ENCODE measurements at regions of chr3 and their contacts with region 1.

Region 1: DNA sequence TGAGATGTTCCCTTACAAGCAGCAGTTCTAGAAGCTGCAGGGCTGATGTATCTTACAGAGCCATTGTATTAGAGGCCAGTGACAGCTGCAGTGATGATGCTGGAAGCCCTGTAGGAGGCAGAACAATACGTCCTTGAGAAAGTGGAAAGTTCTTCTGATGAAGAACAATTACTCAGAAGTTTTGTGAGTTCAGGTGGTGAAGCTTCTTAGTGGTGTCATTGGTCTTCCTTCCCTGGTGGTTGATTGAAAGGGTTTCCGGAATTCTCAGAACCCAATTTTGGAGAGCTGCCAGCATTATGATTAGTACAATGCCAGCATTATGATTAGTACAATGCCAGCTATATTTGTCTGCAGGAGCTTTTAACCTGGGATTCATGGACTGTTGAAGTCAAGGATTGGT is 356.4 kb downstream of the MFSD1 start:
- DNase-seq: peak; percentile 88
- H3K4me3 ChIP-seq: no peak overlapping the region
- H3K27ac ChIP-seq: peak overlapping the region; percentile 48
- H3K4me1 ChIP-seq: peaks cover 15% of the 10 kb centered on the region
- H3K27me3 ChIP-seq: no peaks in the 10 kb centered on the region
- CTCF ChIP-seq: peak; percentile 30 to 42
- POLR2A ChIP-seq: no peak

Region 2: GRCh38 chr3:158845765-158846350 is 312.4 kb before region 1 on chr3:
- CTCF ChIA-PET with region 1: interaction called, 4 read pairs
- POLR2A ChIA-PET with region 1: no interaction called
- dilution Hi-C with region 1: no loop called
- intact Hi-C with region 1: loop called (anchors 10 kb)
- DNase-seq: peak; percentile 30
- H3K4me3 ChIP-seq: no peak overlapping the region
- H3K27ac ChIP-seq: no peak overlapping the region
- H3K4me1 ChIP-seq: no peaks in the 10 kb centered on the region
- H3K27me3 ChIP-seq: no peaks in the 10 kb centered on the region
- CTCF ChIP-seq: peak; percentile 49 to 60
- POLR2A ChIP-seq: no peak

Region 3: GRCh38 chr3:159082519-159082918 is 75.7 kb before region 1 on chr3:
- CTCF ChIA-PET with region 1: no interaction called
- POLR2A ChIA-PET with region 1: no interaction called
- dilution Hi-C with region 1: no loop called
- intact Hi-C with region 1: loop called (anchors 5 kb)
- DNase-seq: peak; percentile 61
- H3K4me3 ChIP-seq: no peak overlapping the region
- H3K27ac ChIP-seq: peak overlapping the region; percentile 52
- H3K4me1 ChIP-seq: peaks cover 10% of the 10 kb centered on the region
- H3K27me3 ChIP-seq: no peaks in the 10 kb centered on the region
- CTCF ChIP-seq: no peak
- POLR2A ChIP-seq: no peak

Region 4: GRCh38 chr3:159169828-159170227 is 11.6 kb after region 1 on chr3:
- CTCF ChIA-PET with region 1: interaction called, 10 read pairs
- POLR2A ChIA-PET with region 1: no interaction called
- dilution Hi-C with region 1: no loop called
- intact Hi-C with region 1: loop called (anchors 1 kb)
- DNase-seq: peak; percentile 82
- H3K4me3 ChIP-seq: no peak overlapping the region
- H3K27ac ChIP-seq: peak overlapping the region; percentile 87
- H3K4me1 ChIP-seq: peaks cover 32% of the 10 kb centered on the region
- H3K27me3 ChIP-seq: no peaks in the 10 kb centered on the region
- CTCF ChIP-seq: no peak
- POLR2A ChIP-seq: peak; percentile 71

Region 5: DNA sequence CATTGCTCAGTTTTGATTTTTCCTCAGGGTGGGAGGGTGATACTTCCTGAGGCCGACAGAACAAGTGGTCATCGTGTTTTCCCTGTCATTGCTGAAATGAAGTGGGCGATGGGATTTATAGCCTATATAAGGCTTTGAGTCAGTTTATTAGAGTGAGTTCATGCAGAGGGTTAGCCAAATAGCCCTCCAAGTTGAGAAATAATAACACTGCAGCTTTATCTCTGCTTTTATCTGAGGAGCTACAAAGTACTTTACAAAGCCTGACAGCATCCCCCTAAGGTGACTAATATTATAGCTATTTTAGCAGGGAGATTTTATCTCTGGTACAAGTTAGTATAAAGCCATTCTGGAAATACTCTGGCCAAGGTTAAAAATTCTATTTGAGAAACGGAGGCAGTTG is 33.2 kb after region 1 on chr3:
- CTCF ChIA-PET with region 1: interaction called, 15 read pairs
- POLR2A ChIA-PET with region 1: no interaction called
- dilution Hi-C with region 1: no loop called
- intact Hi-C with region 1: loop called (anchors 1 kb)
- DNase-seq: peak; percentile 89
- H3K4me3 ChIP-seq: no peak overlapping the region
- H3K27ac ChIP-seq: peak overlapping the region; percentile 52
- H3K4me1 ChIP-seq: peaks cover 28% of the 10 kb centered on the region
- H3K27me3 ChIP-seq: no peaks in the 10 kb centered on the region
- CTCF ChIP-seq: no peak
- POLR2A ChIP-seq: no peak

Region 6: GRCh38 chr3:159664009-159664408 is 505.8 kb after region 1 on chr3:
- CTCF ChIA-PET with region 1: no interaction called
- POLR2A ChIA-PET with region 1: no interaction called
- dilution Hi-C with region 1: no loop called
- intact Hi-C with region 1: no loop called
- DNase-seq: no peak
- H3K4me3 ChIP-seq: no peak overlapping the region
- H3K27ac ChIP-seq: no peak overlapping the region
- H3K4me1 ChIP-seq: no peaks in the 10 kb centered on the region
- H3K27me3 ChIP-seq: peaks cover 6 to 7% of the 10 kb centered on the region in 2 experiments
- CTCF ChIP-seq: no peak
- POLR2A ChIP-seq: no peak

Measured in endothelial cell of umbilical vein (primary cell).